Activated naive CD4-positive, alpha-beta T cell treated with anti-CD3 and anti-CD28 coated beads for 36 hours (primary cell): ENCODE measurements at regions of chr15 and their contacts with region 1.

Region 1: DNA sequence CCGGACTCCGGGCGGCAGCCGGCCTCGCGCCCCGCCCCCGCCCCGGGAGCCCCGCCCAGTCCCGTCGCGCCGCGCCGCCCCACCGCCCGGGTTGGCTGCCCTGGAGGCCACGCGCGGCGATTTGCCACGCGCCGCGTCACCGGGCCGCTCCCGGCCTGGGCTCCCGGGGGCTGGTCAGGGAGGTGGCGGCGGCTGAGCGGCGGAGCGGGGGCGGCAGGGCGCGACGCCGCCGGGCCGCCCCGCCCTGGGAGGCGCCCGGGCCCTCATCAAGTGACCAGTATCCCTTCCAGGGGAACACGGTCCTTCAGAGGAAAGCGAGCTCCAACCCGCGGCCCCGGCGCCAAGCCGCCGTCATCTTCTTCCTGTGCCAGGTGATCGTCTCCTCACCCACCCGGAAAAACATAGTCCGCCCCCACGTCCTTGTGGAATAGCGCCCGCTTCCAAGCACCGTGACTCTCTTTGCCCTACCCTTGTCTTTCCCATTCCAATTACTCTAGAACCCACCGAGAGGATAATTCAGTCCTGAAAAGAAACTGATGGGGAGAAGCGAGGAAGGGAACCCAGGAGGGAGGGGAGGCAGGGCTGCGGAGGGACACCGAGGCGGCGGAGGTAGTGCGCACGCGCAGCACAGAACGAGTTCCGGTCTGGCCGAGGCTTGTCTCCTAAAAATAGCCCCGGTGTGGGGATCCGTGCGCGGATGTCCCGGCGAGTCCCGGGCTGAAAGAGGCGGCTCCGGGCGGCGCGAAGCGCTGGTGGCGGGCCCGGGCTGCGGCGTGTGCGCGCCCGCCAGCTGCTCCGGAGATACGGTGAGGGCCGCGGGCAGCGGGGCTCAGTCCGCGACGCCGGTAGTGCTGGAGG is at the start of gene MEF2A:
- DNase-seq: peak; percentile 95
- H3K4me3 Mint-ChIP-seq: peak within 1 kb of the TSS; percentile 99
- H3K27ac Mint-ChIP-seq: peak within 1 kb of the TSS; percentile 94
- H3K4me1 Mint-ChIP-seq: peaks cover 24% of the 10 kb centered on the region
- H3K27me3 Mint-ChIP-seq: no peaks in the 10 kb centered on the region
- total RNA-seq, gene MEF2A: 15.3 to 15.5 TPM

Region 2: GRCh38 chr15:99424978-99425656 is 140.4 kb before region 1 on chr15:
- CTCF ChIA-PET with region 1: no interaction called
- intact Hi-C with region 1: loop called (anchors 5 kb)
- DNase-seq: peak; percentile 83
- H3K4me3 Mint-ChIP-seq: no peak overlapping the region
- H3K27ac Mint-ChIP-seq: peak overlapping the region; percentile 53
- H3K4me1 Mint-ChIP-seq: peaks cover 55% of the 10 kb centered on the region
- H3K27me3 Mint-ChIP-seq: no peaks in the 10 kb centered on the region

Region 3: DNA sequence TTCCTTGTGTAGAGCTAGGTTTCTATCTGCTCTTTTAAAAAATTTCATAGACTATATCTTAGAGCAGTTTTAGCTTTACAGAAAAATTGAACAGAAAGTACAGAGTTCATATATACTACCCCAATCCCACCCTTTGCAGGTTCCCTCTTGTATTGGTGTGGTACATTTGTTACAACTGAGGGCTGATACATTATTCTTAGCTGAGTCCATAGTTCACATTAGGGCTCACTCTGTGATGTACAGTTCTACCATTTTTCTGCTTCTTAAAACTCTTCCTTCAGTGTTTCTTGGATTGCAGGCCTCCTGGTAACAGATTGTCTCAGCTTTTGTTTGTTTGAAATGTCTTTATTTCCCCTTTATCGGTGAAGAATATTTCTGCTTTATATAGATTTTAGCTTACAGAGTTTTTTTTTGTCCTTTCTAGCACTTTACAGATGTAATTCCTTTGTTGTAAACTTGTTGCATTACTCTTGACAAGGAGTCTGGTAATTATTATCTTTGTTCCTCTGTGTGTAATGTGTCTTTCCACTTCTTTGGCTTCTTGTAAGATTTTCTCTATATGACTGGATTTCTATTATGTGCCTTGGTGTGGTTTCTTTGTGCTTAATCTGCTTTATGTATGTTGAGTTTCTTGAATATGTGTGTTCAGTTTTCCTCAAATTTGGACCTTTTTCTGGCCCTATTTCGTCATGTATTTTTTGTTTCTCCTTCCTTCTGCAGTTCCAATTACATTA is 25.6 kb after region 1 on chr15:
- CTCF ChIA-PET with region 1: no interaction called
- intact Hi-C with region 1: loop called (anchors 2 kb)
- DNase-seq: no peak
- H3K4me3 Mint-ChIP-seq: no peak overlapping the region
- H3K27ac Mint-ChIP-seq: no peak overlapping the region
- H3K4me1 Mint-ChIP-seq: peaks cover 42% of the 10 kb centered on the region
- H3K27me3 Mint-ChIP-seq: no peaks in the 10 kb centered on the region

Region 4: DNA sequence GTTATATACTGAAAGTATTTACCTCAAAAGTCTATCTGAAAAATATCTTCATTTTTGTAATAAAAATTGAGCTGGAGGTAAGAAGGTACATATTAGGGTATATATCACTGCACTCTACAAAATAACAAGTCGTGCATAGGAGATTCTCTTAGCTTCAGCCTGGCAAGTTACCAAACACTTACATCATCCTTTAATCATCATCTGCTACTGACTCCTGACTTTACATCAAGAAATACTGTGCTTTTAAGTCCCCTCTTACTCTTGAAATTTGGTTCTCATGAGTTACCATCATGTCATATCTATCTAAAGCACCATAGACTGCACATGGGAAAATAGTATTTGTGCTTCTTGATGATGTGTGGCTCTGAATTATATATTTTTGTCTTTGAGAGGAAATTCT is 116.9 kb after region 1 on chr15:
- CTCF ChIA-PET with region 1: no interaction called
- intact Hi-C with region 1: loop called (anchors 2 kb)
- DNase-seq: no peak
- H3K4me3 Mint-ChIP-seq: no peak overlapping the region
- H3K27ac Mint-ChIP-seq: peak overlapping the region; percentile 47
- H3K4me1 Mint-ChIP-seq: peaks cover 23% of the 10 kb centered on the region
- H3K27me3 Mint-ChIP-seq: no peaks in the 10 kb centered on the region

Region 5: DNA sequence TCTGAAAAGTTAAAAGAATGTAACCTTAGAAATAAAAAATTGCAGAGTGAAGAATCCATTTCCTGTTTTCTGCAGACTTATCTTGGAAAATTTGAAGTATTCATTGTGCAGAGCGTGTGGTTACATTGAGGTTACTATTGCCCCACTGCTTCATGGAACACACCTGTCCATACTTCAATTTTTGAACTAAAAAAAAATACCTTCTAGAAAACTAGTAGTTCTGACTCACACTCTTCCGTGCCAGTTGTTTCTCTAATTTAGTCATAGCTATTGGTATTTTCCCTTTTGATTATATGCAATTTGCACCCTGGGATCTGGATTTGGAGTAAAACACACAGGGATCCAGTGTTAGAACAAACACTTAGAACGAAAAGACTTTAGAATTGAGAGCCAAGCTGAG is 279.5 kb after region 1 on chr15:
- CTCF ChIA-PET with region 1: no interaction called
- intact Hi-C with region 1: loop called (anchors 2 kb)
- DNase-seq: peak; percentile 66
- H3K4me3 Mint-ChIP-seq: no peak overlapping the region
- H3K27ac Mint-ChIP-seq: peak overlapping the region; percentile 62
- H3K4me1 Mint-ChIP-seq: peaks cover 57% of the 10 kb centered on the region
- H3K27me3 Mint-ChIP-seq: no peaks in the 10 kb centered on the region